Right ventricle myocardium inferior (tissue), 1 donor: ENCODE measurements at regions of chr13 and their contacts with region 1.

Region 1: DNA sequence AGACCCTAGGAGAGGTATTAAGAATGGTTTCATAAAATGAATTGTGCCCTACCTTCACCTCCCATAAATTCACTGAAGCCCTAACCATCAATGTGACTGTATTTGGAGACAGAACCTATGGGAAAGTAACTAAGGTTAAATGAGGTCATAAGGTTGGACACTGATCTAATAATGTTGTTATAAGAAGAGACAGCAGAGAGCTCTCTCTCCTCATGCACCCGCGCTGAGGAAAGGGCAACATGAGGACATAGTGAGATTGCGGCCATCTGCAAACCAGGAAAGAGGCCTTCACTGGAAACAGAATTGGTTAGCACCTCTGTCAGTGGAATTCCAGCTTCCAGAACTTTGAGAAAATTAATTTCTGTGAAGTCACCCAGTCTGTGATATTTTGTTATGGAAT is 1396.1 kb upstream of the MIR17HG start:
- DNase-seq: no peak
- ATAC-seq: no peak

Region 2: DNA sequence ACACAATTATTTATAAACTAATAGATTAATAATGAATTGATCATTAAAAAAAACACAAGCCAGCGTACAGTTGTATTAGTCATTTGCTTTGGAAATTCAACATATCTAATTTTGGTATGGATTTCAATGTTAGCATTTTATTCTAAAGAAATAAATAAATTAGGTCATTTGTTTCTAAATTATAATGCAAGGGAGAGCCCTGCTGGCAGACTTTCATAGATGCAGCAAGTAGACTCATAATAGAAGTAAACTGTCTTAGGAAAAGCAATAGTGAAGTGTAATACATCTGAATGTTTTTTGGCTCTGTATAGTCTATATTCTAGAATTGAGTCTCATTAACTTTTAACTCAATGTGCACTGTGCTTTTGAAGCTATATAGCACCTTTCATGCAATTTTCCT is 413.8 kb after region 1 on chr13:
- intact Hi-C with region 1: loop called (anchors 10 kb)
- DNase-seq: no peak
- ATAC-seq: no peak